Heart right ventricle (tissue), 16 donors: ENCODE measurements at regions of chr2 and their contacts with region 1.

Region 1: GRCh38 chr2:238263204-238264071 is 23.6 kb upstream of the HES6 start:
- DNase-seq: peak; percentile 91 to 92
- ATAC-seq: peak; percentile 72 to 87 (median 83)
- H3K4me3 ChIP-seq: no peak overlapping the region
- H3K27ac ChIP-seq: peak overlapping the region in 9 of 10 donors; percentile 34 to 70 (median 50)
- H3K4me1 ChIP-seq: peaks cover 3 to 42% (median 29%) of the 10 kb centered on the region in 9 donors
- H3K27me3 ChIP-seq: no peaks in the 10 kb centered on the region
- CTCF ChIP-seq: peak; percentile 71 to 89 (median 82)

Region 2: GRCh38 chr2:237923481-237924163 is 339.8 kb before region 1 on chr2:
- intact Hi-C with region 1: loop called in 1 of 10 experiments (anchors 1 kb)
- DNase-seq: peak; percentile 67 to 84
- ATAC-seq: peak; percentile 87 to 94 (median 92)
- H3K4me3 ChIP-seq: peak overlapping the region in 7 of 10 donors; percentile 28 to 47 (median 40)
- H3K27ac ChIP-seq: peak overlapping the region in 8 of 10 donors; percentile 12 to 58 (median 38)
- H3K4me1 ChIP-seq: peaks cover 0 to 18% (median 8%) of the 10 kb centered on the region in 9 donors
- H3K27me3 ChIP-seq: no peaks in the 10 kb centered on the region
- CTCF ChIP-seq: peak; percentile 95 to 99 (median 98)

Region 3: DNA sequence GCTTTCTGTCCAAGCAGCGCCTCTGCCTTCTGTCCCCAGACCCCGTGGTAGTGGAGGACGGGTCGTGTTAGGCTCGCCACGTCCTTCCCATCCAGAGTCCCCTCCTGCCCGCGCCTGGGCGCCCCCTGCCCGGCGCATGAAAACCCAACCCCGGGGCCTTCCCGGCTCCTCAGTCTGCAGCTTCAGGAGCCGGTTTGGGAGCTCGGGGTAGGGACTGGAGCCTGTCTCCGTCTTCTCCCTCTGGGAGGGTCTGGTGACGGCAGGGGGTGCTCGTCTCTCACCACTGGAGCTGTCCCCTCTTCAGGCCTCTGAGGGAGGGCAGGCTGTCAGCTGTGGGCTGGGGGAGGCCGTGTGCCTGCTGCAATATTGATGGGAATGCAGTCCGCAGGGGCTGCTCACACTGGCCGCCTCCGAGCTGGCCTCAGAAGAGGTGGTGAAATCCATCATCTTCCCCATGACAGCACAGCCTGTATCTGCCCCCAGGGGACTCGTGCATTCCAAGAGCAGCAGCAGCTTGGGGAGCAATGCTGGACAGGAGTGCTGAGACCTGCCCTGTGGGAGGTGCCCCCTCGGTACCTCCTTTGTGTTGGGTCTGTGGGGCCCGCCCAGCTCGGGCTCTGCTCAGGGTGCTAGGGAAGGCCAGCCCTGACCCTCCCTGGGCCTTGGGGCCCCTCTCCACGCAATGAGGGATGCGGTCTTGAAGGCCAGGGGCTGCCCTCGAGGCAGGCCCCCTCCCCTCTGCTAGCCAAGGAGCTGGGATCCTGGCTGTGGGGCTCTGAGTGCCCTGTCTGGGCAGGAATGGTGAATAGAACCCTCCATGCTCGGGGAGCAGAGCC is 142.8 kb before region 1 on chr2:
- intact Hi-C with region 1: loop called in 1 of 10 experiments (anchors 2 kb)
- DNase-seq: peak in 1 of 2 donors; percentile 23
- ATAC-seq: peak in 7 of 8 donors; percentile 4 to 71 (median 52)
- H3K4me3 ChIP-seq: no peak overlapping the region
- H3K27ac ChIP-seq: no peak overlapping the region
- H3K4me1 ChIP-seq: peaks cover 0 to 8% (median 0%) of the 10 kb centered on the region in 9 donors
- H3K27me3 ChIP-seq: peaks cover 0 to 30% (median 19%) of the 10 kb centered on the region in 7 donors
- CTCF ChIP-seq: peak in 6 of 9 donors; percentile 12 to 41 (median 24)

Region 4: GRCh38 chr2:238160206-238161109 is 103.0 kb before region 1 on chr2:
- intact Hi-C with region 1: loop called in 3 of 10 experiments (anchors 5 to 10 kb)
- DNase-seq: peak; percentile 9 to 14
- ATAC-seq: peak in 3 of 8 donors; percentile 13 to 39 (median 24)
- H3K4me3 ChIP-seq: no peak overlapping the region
- H3K27ac ChIP-seq: no peak overlapping the region
- H3K4me1 ChIP-seq: peaks cover 0 to 29% (median 9%) of the 10 kb centered on the region in 9 donors
- H3K27me3 ChIP-seq: peaks cover 8 to 63% (median 53%) of the 10 kb centered on the region in 7 donors
- CTCF ChIP-seq: peak in 5 of 9 donors; percentile 19 to 41 (median 32)

Region 5: DNA sequence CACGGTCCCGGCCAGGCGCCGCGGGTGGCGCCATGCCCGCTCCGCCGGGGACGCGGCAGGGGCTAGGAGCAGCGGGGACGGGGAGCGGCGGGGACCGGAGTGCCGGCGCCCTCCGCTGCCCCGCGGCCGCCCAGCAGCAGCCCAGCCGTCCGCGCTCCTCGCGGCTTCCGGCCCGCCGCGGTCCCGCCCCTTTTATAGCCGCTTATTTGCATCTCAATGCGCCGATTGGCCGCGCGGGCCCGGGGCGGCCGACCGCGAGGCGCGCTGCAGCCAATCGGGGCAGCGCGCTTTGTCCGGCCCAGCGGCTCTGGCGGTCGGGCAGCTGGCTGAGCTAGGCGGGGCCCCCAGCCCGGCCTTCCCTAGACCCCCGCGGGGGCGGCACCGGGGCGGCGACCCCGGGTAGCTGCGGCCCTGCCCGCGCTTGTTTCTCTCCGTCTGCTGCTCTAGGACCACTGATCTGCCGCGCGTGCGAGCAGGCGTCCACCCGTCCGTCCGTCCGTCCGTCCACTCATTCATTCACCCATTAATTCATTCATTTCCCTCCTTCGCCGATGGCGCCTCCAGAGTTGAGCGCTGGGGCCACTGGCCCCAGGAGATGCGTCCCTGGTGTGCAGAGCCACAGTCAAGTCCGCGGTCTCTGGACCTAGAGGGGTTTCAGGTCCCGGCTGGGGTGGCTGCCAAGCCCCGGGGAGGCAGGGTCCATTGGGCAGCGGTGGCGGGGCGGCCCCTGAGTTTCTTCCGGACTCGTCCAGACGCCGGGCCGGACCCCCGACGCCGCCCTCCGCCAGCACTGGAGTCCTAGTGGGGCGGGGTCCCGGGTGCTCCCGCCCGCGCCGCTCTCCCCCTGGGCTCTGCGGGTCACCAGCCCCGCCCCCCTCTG is 23.3 kb before region 1 on chr2 and contains the start of gene HES6:
- intact Hi-C with region 1: loop called in 1 of 10 experiments (anchors 1 kb)
- DNase-seq: peak; percentile 89 to 90
- ATAC-seq: peak; percentile 81 to 96 (median 90)
- H3K4me3 ChIP-seq: peak within 1 kb of the TSS; percentile 44 to 69 (median 64)
- H3K27ac ChIP-seq: peak within 1 kb of the TSS in 4 of 10 donors; percentile 37 to 58 (median 42)
- H3K4me1 ChIP-seq: peaks cover 10 to 41% (median 33%) of the 10 kb centered on the region in 9 donors
- H3K27me3 ChIP-seq: peaks cover 0 to 59% (median 19%) of the 10 kb centered on the region in 7 donors
- CTCF ChIP-seq: peak in 1 of 9 donors; percentile 36
- total RNA-seq, gene HES6: 1.1 to 3.9 (median 1.9) TPM

Region 6: DNA sequence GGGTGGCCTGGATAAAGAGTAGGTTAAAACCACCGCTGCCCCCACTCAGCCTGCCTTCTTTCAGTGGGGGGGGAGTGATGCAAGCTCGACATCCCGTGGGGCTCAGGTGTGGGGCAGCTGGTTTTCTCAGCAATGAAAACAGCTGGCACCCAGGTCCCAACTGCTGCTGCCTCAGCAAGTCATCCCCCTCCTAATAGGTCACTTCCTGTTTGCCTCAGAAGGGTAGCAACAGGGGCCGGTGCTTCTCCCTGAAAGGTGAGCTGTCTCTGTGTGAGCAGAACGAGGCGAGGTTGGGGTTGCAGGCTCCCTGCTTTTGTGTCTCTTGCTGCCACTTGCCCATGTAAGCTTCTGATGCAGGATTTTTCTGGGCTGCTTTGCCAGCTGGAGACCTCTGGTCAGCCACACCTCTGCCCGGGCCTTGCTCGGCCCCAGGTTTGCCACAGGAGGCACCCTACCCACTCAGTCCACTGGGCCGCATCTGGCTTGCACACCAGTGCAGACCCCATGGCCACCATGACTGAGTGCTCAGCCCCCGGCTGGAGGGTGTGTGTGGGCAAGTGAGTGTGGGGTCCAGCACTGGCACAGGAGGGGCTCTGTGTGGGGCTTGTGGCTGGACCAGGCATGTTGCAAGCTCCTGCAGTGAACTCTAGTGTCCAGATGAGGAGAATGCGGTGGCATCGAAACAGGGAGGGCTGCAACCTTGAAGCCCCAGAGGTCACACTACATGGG is 151.8 kb after region 1 on chr2:
- intact Hi-C with region 1: no loop called
- DNase-seq: no peak
- ATAC-seq: no peak
- H3K4me3 ChIP-seq: no peak overlapping the region
- H3K27ac ChIP-seq: no peak overlapping the region
- H3K4me1 ChIP-seq: peaks cover 0 to 14% (median 6%) of the 10 kb centered on the region in 9 donors
- H3K27me3 ChIP-seq: peaks cover 0 to 50% (median 8%) of the 10 kb centered on the region in 7 donors
- CTCF ChIP-seq: no peak